Calu3 (cell line): ENCODE measurements at regions of chr18 and their contacts with region 1.

Region 1: GRCh38 chr18:68854786-68855391 is 57.0 kb downstream of the CCDC102B start:
- DNase-seq: no peak
- H3K4me3 Mint-ChIP-seq: no peak overlapping the region
- H3K27ac Mint-ChIP-seq: no peak overlapping the region
- H3K4me1 Mint-ChIP-seq: no peaks in the 10 kb centered on the region
- H3K27me3 Mint-ChIP-seq: no peaks in the 10 kb centered on the region
- CTCF ChIP-seq: no peak

Region 2: GRCh38 chr18:70059684-70060083 is 1204.8 kb after region 1 on chr18:
- CTCF ChIA-PET with region 1: no interaction called
- intact Hi-C with region 1: loop called (anchors 5 kb)
- DNase-seq: no peak
- H3K4me3 Mint-ChIP-seq: no peak overlapping the region
- H3K27ac Mint-ChIP-seq: no peak overlapping the region
- H3K4me1 Mint-ChIP-seq: no peaks in the 10 kb centered on the region
- H3K27me3 Mint-ChIP-seq: no peaks in the 10 kb centered on the region
- CTCF ChIP-seq: no peak